Heart left ventricle (tissue), 16 donors: ENCODE measurements at regions of chr22 and their contacts with region 1.

Region 1: DNA sequence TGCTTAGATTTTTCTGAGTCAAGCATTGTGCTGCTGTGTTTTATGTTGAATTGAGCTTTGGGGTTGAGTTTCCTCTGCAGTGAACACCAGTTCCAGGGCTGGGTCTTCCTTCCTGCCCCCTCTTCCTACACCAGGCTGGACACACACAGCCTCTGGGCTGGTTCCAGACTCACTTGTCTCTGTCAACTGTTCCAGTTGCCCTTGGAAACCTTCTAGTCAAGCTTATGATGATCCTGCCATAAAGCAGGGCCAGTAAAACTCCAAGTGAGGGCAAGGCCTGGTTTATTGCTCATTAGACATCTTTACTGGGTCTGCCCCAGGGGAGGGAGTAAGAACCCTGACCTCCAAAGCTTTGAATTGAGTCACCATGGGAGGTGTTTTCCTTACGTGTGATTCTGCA is 61.1 kb downstream of the KIAA1671 start:
- DNase-seq: peak in 4 of 5 donors; percentile 38 to 60 (median 57)
- ATAC-seq: peak; percentile 47 to 75 (median 72)
- H3K4me3 ChIP-seq: no peak overlapping the region
- H3K27ac ChIP-seq: peak overlapping the region in 9 of 12 donors; percentile 13 to 72 (median 60)
- H3K4me1 ChIP-seq: peaks cover 0 to 52% (median 25%) of the 10 kb centered on the region in 12 donors
- H3K27me3 ChIP-seq: no peaks in the 10 kb centered on the region
- CTCF ChIP-seq: no peak
- POLR2A ChIP-seq: no peak

Region 2: DNA sequence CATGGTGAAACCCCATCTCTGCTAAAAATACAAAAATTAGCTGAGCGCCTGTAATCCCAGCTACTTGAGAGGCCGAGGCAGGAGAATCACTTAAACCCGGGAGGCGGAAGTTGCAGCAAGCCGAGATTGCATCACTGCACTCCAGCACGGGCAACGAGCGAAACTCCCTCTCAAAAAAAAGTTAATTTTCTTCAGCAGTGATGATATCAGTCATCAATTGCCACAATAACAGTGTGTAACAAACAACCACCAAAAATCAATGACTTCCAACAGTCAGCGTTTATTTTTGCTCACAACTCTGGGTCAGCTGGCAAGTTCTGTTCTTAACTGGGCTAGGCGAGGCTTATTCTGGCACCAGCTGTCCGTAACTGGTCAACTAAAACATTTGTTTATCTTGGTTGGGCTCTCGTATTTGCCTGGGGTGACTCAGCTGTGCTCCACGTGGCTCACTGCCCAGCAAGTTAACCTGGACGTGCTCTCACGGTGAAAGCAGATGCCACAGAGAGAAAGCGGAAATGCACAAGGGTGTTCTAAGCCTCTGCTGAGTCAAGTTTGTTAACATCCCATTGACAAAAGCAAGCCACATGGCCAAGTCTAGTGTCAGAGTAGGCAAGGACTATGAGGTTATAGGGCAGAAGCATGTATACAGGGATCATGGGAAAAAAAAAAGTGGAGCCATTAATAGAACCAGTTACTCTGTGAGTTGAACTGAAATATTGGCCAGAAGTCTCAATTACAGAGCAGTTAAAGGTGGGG is 119.2 kb before region 1 on chr22:
- intact Hi-C with region 1: no loop called
- DNase-seq: peak; percentile 80 to 91 (median 85)
- ATAC-seq: peak; percentile 91 to 96 (median 93)
- H3K4me3 ChIP-seq: peak overlapping the region in 9 of 12 donors; percentile 0 to 30 (median 16)
- H3K27ac ChIP-seq: peak overlapping the region; percentile 50 to 86 (median 82)
- H3K4me1 ChIP-seq: peaks cover 0 to 22% (median 17%) of the 10 kb centered on the region in 12 donors
- H3K27me3 ChIP-seq: no peaks in the 10 kb centered on the region
- CTCF ChIP-seq: no peak
- POLR2A ChIP-seq: no peak

Region 3: GRCh38 chr22:24969560-24970301 is 43.9 kb before region 1 on chr22:
- intact Hi-C with region 1: loop called in 1 of 10 experiments (anchors 5 kb)
- DNase-seq: peak in 4 of 5 donors; percentile 72 to 82 (median 78)
- ATAC-seq: peak; percentile 59 to 92 (median 84)
- H3K4me3 ChIP-seq: peak overlapping the region in 1 of 12 donors; percentile 11
- H3K27ac ChIP-seq: peak overlapping the region; percentile 47 to 83 (median 70)
- H3K4me1 ChIP-seq: peaks cover 3 to 72% (median 44%) of the 10 kb centered on the region in 12 donors
- H3K27me3 ChIP-seq: no peaks in the 10 kb centered on the region
- CTCF ChIP-seq: no peak
- POLR2A ChIP-seq: no peak

Region 4: DNA sequence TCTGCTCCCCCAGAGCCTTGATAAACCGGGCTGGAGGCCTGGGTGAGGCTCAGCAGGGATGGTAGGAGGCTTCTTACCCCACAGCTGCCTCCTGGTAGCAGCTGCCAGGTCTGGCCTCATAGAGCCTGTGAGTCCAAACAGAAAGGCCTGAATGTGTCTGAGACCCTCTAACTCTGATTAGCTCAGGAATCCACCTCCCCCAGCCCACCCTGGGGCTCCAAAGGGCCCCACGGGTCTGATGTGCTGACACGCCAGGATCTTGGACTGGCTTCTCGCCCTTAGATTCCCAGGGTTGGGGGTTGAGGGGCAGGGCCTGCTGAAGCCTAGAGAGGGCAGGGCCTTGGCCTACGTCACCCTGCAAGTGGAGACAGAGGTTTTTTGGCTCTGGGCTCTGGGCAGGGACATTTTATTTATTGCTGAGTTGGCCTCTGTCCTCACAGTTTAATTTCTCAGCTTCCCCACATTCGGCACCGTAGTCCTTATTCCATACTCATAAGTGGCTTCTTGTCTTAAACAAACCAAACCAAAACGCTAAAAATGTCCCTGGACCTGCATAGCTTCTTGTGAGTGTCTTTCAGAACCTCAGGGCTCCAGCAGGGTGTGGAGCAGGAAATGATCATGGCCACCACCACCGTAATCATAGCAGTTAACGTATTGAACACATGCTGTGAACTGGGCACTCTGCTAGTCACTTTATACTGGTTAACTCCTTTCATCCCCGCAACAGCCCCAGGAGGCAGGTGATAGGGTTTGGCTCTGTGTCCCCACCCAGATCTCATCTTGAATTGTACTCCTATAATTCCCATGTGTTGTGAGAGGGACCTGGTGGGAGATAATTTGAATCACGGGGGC is 36.0 kb before region 1 on chr22:
- intact Hi-C with region 1: loop called in 2 of 10 experiments (anchors 5 kb)
- DNase-seq: peak; percentile 65 to 82 (median 73)
- ATAC-seq: peak; percentile 68 to 88 (median 78)
- H3K4me3 ChIP-seq: no peak overlapping the region
- H3K27ac ChIP-seq: peak overlapping the region; percentile 76 to 90 (median 80)
- H3K4me1 ChIP-seq: peaks cover 10 to 62% (median 44%) of the 10 kb centered on the region in 12 donors
- H3K27me3 ChIP-seq: no peaks in the 10 kb centered on the region
- CTCF ChIP-seq: no peak
- POLR2A ChIP-seq: no peak